ENCODE measurements at regions of chr5 and their contacts with region 1.

Region 1: DNA sequence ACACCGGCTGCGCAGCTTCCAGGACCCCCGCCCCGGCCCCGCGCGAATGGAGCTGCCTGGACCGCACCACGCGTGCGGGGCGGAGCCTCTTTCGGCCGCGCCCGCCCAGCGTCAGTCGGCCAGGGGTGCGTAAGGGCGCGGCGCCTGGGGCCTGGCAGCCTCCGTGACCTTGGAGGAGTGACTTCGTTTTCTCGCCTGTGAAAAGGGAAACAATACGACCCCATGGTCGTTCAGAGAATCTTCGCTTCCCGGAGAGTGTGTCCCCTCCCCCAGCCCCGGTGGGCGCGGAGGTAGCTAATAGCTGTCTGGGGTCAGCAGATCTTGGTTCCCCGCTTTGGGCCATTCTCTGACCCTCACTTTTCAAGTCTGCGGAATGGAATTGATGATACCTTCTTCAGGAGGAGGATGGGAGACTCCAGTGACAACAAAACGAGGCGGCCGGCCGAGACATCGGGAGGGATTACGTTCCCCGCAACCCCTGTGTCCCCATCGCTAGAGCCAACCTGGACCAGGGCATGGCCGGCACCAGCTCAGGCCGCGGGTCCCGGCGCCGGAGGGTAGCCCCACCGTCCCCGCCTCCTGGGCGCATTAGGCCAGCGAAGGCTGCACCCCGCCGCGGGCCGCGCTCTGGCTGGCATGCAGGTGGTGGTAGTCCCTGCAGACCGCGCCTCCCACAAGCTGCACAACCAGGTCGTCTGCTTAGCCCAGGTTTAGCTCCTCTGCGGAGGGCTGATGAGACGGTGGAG is 5.5 kb upstream of the CDHR2 start:
- DNase-seq: peak; percentile 84
- H3K4me3 Mint-ChIP-seq: peak overlapping the region; percentile 92
- H3K27ac Mint-ChIP-seq: peak overlapping the region; percentile 93
- H3K4me1 Mint-ChIP-seq: peaks cover 61% of the 10 kb centered on the region
- H3K27me3 Mint-ChIP-seq: no peaks in the 10 kb centered on the region

Region 2: GRCh38 chr5:176530983-176531821 is 12.4 kb before region 1 on chr5:
- CTCF ChIA-PET with region 1: interaction called, 34 read pairs
- POLR2A ChIA-PET with region 1: interaction called, 20 read pairs
- intact Hi-C with region 1: no loop called
- DNase-seq: peak; percentile 55
- H3K4me3 Mint-ChIP-seq: peak overlapping the region; percentile 28
- H3K27ac Mint-ChIP-seq: peak overlapping the region; percentile 67
- H3K4me1 Mint-ChIP-seq: peaks cover 49% of the 10 kb centered on the region
- H3K27me3 Mint-ChIP-seq: no peaks in the 10 kb centered on the region